WTC11 (cell line): ENCODE measurements at regions of chr9 and their contacts with region 1.

Region 1: GRCh38 chr9:137086531-137087408 is at the start of gene MAN1B1:
- DNase-seq: peak; percentile 99
- ATAC-seq: peak; percentile 95
- H3K4me3 Mint-ChIP-seq: peak within 1 kb of the TSS; percentile 85
- H3K27ac Mint-ChIP-seq: peak within 1 kb of the TSS; percentile 91
- H3K4me1 Mint-ChIP-seq: peaks cover 16% of the 10 kb centered on the region
- H3K27me3 Mint-ChIP-seq: peaks cover 9% of the 10 kb centered on the region
- CTCF ChIP-seq: no peak
- total RNA-seq, gene MAN1B1: 44.9 to 57.1 TPM (median 47.1 TPM) in 3 replicates

Region 2: GRCh38 chr9:137017791-137018497 is 68.8 kb before region 1 on chr9:
- CTCF ChIA-PET with region 1: no interaction called
- POLR2A ChIA-PET with region 1: no interaction called
- DNase-seq: peak; percentile 42
- ATAC-seq: no peak
- H3K4me3 Mint-ChIP-seq: no peak overlapping the region
- H3K27ac Mint-ChIP-seq: no peak overlapping the region
- H3K4me1 Mint-ChIP-seq: no peaks in the 10 kb centered on the region; the same call in 1 of the 2 replicates
- H3K27me3 Mint-ChIP-seq: no peaks in the 10 kb centered on the region
- CTCF ChIP-seq: no peak

Region 3: DNA sequence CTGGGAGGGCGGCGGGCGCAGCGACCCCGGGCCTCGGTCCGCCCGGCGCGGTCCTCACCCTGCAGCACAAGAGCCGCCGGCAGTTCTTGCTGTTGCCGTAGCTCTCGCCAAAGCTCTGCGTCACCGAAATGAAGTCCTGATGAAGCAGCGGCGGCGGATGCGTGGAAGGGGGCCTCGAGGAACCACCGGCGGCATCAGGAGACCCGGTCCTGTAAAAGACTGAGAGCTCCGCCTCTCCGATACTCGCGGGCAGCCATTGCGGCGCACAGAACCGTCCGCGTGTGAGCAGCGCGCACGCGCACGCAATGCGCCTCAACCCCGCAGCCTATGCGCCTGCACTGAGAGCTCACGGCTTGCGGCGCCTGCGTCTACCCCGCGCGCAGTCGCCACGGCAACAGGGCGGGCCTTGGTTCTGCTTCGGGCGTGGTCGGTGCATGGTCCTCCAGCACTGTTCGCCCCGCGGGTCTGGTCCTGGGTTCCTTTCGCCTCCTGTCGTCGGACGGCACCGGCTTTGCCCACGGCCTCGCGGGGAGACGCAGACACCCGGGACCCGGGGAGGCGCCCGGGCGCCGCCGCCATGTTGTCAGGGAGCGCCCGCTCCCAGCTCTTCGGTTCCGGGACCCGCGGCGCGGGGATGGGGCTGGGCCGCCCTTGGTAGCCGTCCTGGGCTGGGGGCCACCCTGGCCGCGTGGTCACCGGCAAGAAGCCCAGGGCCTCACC is 42.8 kb after region 1 on chr9:
- CTCF ChIA-PET with region 1: interaction called, 14 read pairs
- POLR2A ChIA-PET with region 1: interaction called, 9 read pairs
- DNase-seq: peak; percentile 87
- ATAC-seq: peak; percentile 96
- H3K4me3 Mint-ChIP-seq: peak overlapping the region; percentile 78
- H3K27ac Mint-ChIP-seq: no peak overlapping the region
- H3K4me1 Mint-ChIP-seq: peaks cover 14% of the 10 kb centered on the region
- H3K27me3 Mint-ChIP-seq: peaks cover 23% of the 10 kb centered on the region
- CTCF ChIP-seq: no peak